Activated T-helper 1 cell treated with anti-CD3 and anti-CD28 coated beads, Interleukin-12 subunit alpha, Interleukin-12 subunit beta, Interleukin-2, Interleukin-4 antibody, amounts not matched to agents 30 ng/mL and 10 ng/mL and 1 ng/mL, durations not matched to agents 14 hours and 24 hours and 36 hours (primary cell): ENCODE measurements at regions of chr10 and their contacts with region 1.

Region 1: GRCh38 chr10:22340362-22341189 is 4.7 kb upstream of the SPAG6 start:
- DNase-seq: peak; percentile 67
- H3K4me3 Mint-ChIP-seq: peak overlapping the region; percentile 86
- H3K27ac Mint-ChIP-seq: peak overlapping the region; percentile 96
- H3K4me1 Mint-ChIP-seq: peaks cover 47% of the 10 kb centered on the region
- H3K27me3 Mint-ChIP-seq: peaks cover 76% of the 10 kb centered on the region

Region 2: GRCh38 chr10:21533467-21534279 is 806.9 kb before region 1 on chr10 and contains the start of gene MLLT10:
- intact Hi-C with region 1: loop called (anchors 2 kb)
- DNase-seq: peak; percentile 89
- H3K4me3 Mint-ChIP-seq: peak within 1 kb of the TSS; percentile 90
- H3K27ac Mint-ChIP-seq: peak within 1 kb of the TSS; percentile 90
- H3K4me1 Mint-ChIP-seq: peaks cover 17% of the 10 kb centered on the region
- H3K27me3 Mint-ChIP-seq: peaks cover 16% of the 10 kb centered on the region
- total RNA-seq, gene MLLT10: 40.9 and 43.1 TPM in 2 replicates

Region 3: GRCh38 chr10:22163019-22163418 is 177.6 kb before region 1 on chr10:
- intact Hi-C with region 1: no loop called
- DNase-seq: no peak
- H3K4me3 Mint-ChIP-seq: no peak overlapping the region
- H3K27ac Mint-ChIP-seq: no peak overlapping the region
- H3K4me1 Mint-ChIP-seq: peaks cover 11% of the 10 kb centered on the region
- H3K27me3 Mint-ChIP-seq: no peaks in the 10 kb centered on the region

Region 4: DNA sequence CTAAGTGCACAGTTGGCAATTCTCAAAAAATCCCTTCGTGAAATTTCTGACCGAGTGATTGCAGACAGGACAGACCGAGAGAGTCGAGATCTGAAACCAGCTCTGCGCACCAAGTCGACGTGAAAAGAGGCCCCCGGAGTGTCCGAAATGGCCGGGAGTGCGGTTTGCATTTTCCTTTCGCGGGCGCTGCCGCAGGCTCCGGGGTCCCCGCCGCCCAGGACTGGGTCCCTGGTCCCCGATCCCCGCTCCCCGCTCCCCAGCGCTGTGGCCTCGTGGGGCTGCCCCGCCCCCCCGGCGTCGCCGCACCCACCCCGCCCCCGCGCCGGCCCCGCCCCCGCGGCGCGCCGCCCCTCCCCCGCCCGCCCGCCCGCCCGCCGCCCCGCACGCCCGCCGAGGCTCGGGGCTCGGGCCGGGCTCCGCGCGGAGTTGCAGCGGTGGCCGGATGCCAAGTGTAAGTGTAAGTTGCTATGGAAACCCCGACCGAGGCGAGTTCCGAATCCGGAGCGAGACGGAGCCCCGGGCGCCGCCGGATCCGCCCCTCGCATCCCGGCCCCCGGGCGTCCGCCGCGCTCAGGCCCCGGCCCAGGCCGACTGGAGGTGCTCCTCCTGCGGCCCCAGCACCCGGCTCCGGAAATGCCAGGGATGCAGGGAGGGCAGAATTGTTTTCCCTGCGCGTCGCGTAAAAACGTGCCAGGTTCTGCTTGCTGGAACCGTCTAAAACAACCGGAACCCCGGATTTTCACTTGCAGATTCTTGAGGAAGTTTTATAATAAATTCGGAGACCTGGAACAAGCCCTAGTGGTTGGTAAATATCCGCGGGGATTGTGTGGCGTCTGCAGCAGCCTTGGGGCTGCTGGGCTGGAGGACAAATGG is 15.1 kb before region 1 on chr10:
- intact Hi-C with region 1: loop called (anchors 1 kb)
- DNase-seq: peak; percentile 66
- H3K4me3 Mint-ChIP-seq: peak overlapping the region; percentile 90
- H3K27ac Mint-ChIP-seq: peak overlapping the region; percentile 76
- H3K4me1 Mint-ChIP-seq: peaks cover 43% of the 10 kb centered on the region
- H3K27me3 Mint-ChIP-seq: peaks cover 32% of the 10 kb centered on the region

Region 5: GRCh38 chr10:22436884-22437619 is 96.5 kb after region 1 on chr10:
- intact Hi-C with region 1: loop called (anchors 1 kb)
- DNase-seq: peak; percentile 80
- H3K4me3 Mint-ChIP-seq: peak overlapping the region; percentile 91
- H3K27ac Mint-ChIP-seq: peak overlapping the region; percentile 96
- H3K4me1 Mint-ChIP-seq: peaks cover 49% of the 10 kb centered on the region
- H3K27me3 Mint-ChIP-seq: peaks cover 9% of the 10 kb centered on the region

Region 6: GRCh38 chr10:23095404-23095965 is 754.9 kb after region 1 on chr10 and contains the start of gene MSRB2:
- intact Hi-C with region 1: loop called (anchors 10 kb)
- DNase-seq: peak; percentile 64
- H3K4me3 Mint-ChIP-seq: peak within 1 kb of the TSS; percentile 92
- H3K27ac Mint-ChIP-seq: peak within 1 kb of the TSS; percentile 91
- H3K4me1 Mint-ChIP-seq: peaks cover 36% of the 10 kb centered on the region
- H3K27me3 Mint-ChIP-seq: peaks cover 6% of the 10 kb centered on the region
- total RNA-seq, gene MSRB2: 3.0 and 4.0 TPM in 2 replicates